Left cardiac atrium (tissue), 4 donors: ENCODE measurements at regions of chr16 and their contacts with region 1.

Region 1: DNA sequence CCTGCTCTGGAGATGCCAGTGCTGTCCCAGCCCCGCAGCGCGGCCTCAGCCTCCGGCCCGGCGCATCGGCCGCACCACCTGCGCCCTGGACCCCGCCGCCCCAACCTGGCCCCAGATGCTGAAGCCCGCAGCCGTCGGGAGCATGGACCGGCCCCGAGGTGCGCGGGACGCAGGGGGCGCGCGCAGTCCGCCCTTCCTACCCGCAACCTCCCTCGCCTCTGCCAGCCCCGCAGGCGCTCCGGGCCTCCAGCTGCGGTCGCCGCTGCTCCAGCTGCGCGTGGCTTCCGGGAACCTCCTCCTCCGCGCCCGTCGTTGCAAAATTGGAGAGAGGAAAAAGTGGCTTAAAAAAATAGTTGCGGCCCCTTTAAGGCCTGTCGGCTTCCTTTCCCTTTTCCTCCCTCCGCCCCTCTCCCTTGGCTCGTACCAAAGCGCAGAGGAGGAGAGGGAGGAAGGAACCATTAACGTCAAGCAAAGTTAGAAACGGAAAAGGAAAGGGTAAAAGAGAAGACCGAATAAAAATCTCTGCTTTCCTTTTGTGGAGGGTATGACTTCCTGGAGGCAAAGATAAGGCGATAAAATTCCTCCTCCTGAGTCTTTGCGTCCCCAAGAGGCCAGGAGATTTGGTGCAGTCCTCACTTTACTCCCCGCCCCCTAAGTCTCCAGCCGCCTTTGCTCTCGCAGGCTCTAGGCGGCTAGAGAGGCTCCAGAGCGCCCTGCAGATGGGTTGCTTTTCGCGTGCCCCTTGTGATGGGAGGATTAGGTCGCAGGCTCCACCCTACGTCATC is at the start of gene CDIPT:
- DNase-seq: peak; percentile 96
- ATAC-seq: peak; percentile 97
- total RNA-seq, gene CDIPT: 88.8 to 90.8 TPM

Region 2: DNA sequence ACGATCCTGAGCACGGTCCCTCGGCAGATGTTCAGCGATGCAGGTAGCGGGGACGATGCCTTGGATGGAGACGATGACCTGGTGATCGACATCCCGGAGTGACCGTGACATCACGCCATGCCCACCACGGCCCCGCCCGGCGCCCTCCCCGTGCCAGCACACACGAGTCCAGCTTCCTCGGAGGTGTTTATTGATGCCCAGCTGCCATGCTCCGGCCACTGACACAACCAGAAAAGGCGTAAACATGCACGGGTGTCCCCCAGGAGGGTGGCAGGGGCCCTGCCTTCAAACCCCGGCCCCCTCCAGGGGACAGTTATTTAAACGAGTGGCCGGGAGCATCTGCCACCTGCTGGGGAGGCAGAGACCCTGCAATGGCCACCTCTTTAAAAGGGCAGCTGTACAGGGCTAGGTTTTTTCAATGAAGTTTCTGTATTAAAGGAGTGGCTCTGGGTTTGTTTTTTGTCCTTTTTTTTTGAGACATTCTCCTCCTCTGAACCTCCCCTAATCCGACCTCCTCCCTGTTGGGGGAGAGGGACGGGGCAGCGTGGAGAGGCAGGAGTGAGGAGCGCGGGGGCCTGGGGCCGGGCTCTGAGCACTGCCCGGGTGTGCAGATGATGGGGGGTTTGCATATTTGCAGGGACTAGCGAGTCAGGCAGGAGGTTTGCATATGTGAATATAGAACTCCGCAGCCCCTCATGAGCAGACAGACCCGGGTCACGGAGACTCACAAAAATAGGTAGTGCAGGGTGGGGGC is 142.4 kb after region 1 on chr16:
- intact Hi-C with region 1: loop called (anchors 10 kb)
- DNase-seq: no peak
- ATAC-seq: peak; percentile 36 to 62

Region 3: GRCh38 chr16:30010844-30011713 is 148.0 kb after region 1 on chr16 and contains the start of gene DOC2A:
- intact Hi-C with region 1: loop called (anchors 10 kb)
- DNase-seq: no peak
- ATAC-seq: no peak
- total RNA-seq, gene DOC2A: 0.63 to 0.77 TPM